A549 (cell line): ENCODE measurements at regions of chr6 and their contacts with region 1.

Region 1: DNA sequence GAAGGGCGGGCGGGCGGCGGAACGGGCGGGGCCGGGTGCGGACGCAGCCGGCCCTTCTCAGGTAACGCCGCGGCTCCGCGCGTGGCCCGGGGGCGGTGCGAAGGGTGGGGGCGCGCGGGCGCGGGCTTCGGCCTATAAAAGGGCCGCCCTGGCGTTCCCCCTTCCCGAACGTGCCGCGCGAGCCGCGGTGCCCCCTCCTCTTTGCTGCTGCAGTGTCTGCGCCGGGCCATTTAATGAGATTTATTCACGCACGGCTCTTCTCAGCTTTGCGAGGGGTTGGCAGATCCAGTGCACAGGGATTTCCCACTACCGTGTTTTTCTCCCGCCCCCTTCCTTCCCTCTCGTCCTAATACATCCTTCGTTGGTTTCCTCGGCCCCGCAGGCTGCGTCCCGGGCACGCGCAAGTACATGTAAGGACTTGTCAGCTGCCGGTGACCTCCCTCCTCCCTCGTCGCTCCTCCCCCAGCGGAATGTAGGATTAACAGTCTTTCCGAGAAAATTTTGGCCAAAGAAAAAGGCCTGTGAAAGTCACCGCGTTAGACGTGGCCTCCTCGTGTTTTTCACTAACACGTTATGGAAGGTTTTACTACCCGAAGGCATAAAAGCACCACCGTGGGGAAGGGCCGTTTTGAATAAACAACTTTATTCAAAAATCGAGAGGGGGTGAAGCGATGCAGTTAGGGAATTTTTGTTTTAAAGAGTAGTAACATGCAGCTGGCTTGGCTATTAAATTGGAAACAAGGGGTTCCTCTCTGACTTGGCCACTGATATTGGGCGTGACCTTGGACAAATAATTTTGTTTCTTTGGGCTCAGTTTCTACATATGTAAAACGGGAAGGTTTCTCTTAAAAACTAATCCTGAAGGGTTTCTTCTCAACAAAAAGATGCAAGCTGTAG is 966 bp upstream of the REV3L start:
- DNase-seq: peak; percentile 66 to 93
- ATAC-seq: peak; percentile 80 to 86
- H3K4me3 ChIP-seq: peak overlapping the region; percentile 97
- H3K27ac ChIP-seq: peak overlapping the region; percentile 99
- H3K4me1 ChIP-seq: peaks cover 30% of the 10 kb centered on the region
- CTCF ChIP-seq: no peak
- EP300 ChIP-seq: no peak
- POLR2A ChIP-seq: peak; percentile 45; the same call in 1 of the 2 replicates
- RAD21 ChIP-seq: no peak

Region 2: DNA sequence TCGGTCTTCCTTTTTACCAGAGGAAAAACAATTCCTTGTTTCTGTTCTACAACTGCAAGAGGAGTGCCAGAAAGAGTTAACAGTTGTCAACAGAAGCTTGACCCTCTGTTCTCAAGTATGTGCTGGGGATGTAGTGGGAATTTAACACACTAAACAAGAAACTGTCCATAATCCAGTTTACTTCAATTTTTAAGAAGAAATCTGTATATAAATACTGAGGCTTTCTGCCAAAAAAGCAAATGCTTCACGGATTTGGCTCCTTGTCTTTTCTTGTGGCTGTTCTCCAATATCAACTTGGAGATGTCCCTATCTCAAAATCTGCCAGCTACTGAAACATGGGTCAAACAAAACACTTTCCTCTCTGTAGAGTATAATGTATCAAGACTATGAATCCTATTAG is 27.8 kb before region 1 on chr6:
- CTCF ChIA-PET with region 1: no interaction called
- POLR2A ChIA-PET with region 1: no interaction called
- DNase-seq: no peak
- ATAC-seq: no peak
- H3K4me3 ChIP-seq: no peak overlapping the region
- H3K27ac ChIP-seq: no peak overlapping the region
- H3K4me1 ChIP-seq: no peaks in the 10 kb centered on the region
- CTCF ChIP-seq: no peak
- EP300 ChIP-seq: no peak
- POLR2A ChIP-seq: no peak
- RAD21 ChIP-seq: no peak

Region 3: GRCh38 chr6:111469538-111469937 is 14.4 kb before region 1 on chr6:
- CTCF ChIA-PET with region 1: no interaction called
- POLR2A ChIA-PET with region 1: no interaction called
- DNase-seq: no peak
- ATAC-seq: no peak; a peak in 1 of 6 replicates
- H3K4me3 ChIP-seq: no peak overlapping the region
- H3K27ac ChIP-seq: no peak overlapping the region
- H3K4me1 ChIP-seq: peaks cover 20% of the 10 kb centered on the region
- CTCF ChIP-seq: no peak
- EP300 ChIP-seq: no peak
- POLR2A ChIP-seq: no peak
- RAD21 ChIP-seq: no peak

Region 4: GRCh38 chr6:111565326-111566221 is 81.6 kb after region 1 on chr6:
- CTCF ChIA-PET with region 1: no interaction called
- POLR2A ChIA-PET with region 1: no interaction called
- DNase-seq: peak in 1 of 2 experiments; percentile 19
- ATAC-seq: peak; percentile 50 to 64; a peak in 4 of 6 replicates
- H3K4me3 ChIP-seq: no peak overlapping the region
- H3K27ac ChIP-seq: peak overlapping the region in 1 of 2 experiments; percentile 37; a peak in 1 of 6 replicates
- H3K4me1 ChIP-seq: peaks cover 9% of the 10 kb centered on the region; the same call in 2 of the 3 replicates
- CTCF ChIP-seq: no peak
- EP300 ChIP-seq: no peak
- POLR2A ChIP-seq: no peak
- RAD21 ChIP-seq: no peak

Region 5: DNA sequence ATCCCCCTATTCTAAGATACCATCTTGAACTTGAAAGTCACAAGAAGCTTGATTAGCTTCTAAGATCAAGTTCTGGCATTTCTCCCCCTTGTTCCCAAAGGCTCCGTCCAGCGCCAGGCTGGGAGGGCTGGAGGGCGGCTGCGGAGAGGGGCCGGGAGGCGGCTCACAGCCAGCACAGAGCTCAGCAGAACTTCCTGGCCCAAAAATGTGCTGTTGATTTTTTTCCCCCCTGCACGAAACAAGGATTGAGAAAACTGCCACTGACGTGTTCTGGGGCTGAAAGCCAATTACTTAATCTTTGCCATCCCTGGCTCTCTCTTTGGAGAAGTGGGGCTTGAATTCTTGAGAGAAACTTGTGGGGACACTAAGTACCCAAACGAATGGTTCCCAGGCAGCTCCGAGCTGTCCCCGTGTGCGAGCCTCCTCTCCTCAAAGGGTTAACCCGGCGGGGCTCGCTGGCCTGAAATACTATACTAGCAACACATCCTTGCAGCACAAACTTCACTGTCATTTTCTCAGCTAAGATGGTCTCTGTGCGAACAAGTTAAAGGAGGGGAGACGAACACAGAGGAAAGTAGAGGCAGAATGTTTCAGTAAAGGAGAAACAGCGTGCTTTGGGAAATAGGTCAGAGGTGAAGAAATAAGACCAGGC is 121.2 kb after region 1 on chr6:
- CTCF ChIA-PET with region 1: interaction called, 7 read pairs
- POLR2A ChIA-PET with region 1: interaction called, 30 read pairs
- DNase-seq: peak; percentile 29 to 31
- ATAC-seq: peak; percentile 61 to 71
- H3K4me3 ChIP-seq: peak overlapping the region; percentile 46
- H3K27ac ChIP-seq: peak overlapping the region; percentile 78 to 87
- H3K4me1 ChIP-seq: peaks cover 42% of the 10 kb centered on the region
- CTCF ChIP-seq: no peak
- EP300 ChIP-seq: no peak
- POLR2A ChIP-seq: no peak
- RAD21 ChIP-seq: no peak